ENCODE measurements at regions of chr17 and their contacts with region 1.

Region 1: GRCh38 chr17:8138672-8139371 is 13.4 kb downstream of the PER1 start:
- DNase-seq: peak; percentile 94
- ATAC-seq: peak; percentile 93
- H3K4me3 ChIP-seq: peak overlapping the region; percentile 72
- H3K27ac ChIP-seq: peak overlapping the region; percentile 97
- H3K4me1 ChIP-seq: peaks cover 7% of the 10 kb centered on the region
- H3K27me3 ChIP-seq: no peaks in the 10 kb centered on the region
- CTCF ChIP-seq: peak; percentile 68 to 78 (median 76)
- EP300 ChIP-seq: 0 out of 4 replicates have a peak, but pooled peaks of 1 of the 2 experiments have one; percentile 4
- POLR2A ChIP-seq: peak; percentile 81
- RAD21 ChIP-seq: peak; percentile 57

Region 2: DNA sequence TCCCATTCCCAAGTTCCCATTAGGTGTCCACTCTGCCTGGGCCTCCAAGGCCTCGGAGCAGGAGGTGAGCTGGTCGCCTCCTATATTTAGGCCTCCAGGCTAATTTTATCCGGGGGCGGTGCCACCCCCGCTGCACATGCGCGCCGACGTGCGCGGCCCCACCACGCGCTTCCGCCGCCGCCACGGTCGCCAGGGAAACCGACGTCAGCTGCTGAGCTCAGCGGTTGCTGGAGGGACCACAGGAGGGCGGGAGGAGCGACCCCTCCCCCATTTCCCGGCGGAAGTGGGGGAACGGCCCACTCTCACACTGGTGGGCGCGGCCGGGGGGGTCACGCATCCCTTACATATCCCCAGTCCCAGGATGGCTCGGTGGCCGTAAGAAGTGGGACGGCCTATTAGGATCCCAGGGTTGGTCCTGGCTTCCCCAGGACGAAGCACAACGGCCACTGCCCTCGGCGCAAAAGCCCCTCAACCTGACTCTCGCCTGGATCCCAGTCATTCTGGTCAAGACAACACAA is 12.4 kb after region 1 on chr17:
- CTCF ChIA-PET with region 1: interaction called, 36 read pairs
- POLR2A ChIA-PET with region 1: interaction called, 37 read pairs
- RAD21 ChIA-PET with region 1: interaction called, 33 read pairs
- SMC1A ChIA-PET with region 1: interaction called, 42 read pairs
- in situ Hi-C with region 1: no loop called
- intact Hi-C with region 1: loop called (anchors 1 kb)
- DNase-seq: no peak
- ATAC-seq: peak; percentile 75
- H3K4me3 ChIP-seq: peak overlapping the region; percentile 89
- H3K27ac ChIP-seq: peak overlapping the region; percentile 89
- H3K4me1 ChIP-seq: peaks cover 19% of the 10 kb centered on the region
- H3K27me3 ChIP-seq: no peaks in the 10 kb centered on the region
- CTCF ChIP-seq: no peak
- EP300 ChIP-seq: peak; percentile 45 to 70; a peak in 3 of 4 replicates
- POLR2A ChIP-seq: peak; percentile 69
- RAD21 ChIP-seq: no peak

Region 3: DNA sequence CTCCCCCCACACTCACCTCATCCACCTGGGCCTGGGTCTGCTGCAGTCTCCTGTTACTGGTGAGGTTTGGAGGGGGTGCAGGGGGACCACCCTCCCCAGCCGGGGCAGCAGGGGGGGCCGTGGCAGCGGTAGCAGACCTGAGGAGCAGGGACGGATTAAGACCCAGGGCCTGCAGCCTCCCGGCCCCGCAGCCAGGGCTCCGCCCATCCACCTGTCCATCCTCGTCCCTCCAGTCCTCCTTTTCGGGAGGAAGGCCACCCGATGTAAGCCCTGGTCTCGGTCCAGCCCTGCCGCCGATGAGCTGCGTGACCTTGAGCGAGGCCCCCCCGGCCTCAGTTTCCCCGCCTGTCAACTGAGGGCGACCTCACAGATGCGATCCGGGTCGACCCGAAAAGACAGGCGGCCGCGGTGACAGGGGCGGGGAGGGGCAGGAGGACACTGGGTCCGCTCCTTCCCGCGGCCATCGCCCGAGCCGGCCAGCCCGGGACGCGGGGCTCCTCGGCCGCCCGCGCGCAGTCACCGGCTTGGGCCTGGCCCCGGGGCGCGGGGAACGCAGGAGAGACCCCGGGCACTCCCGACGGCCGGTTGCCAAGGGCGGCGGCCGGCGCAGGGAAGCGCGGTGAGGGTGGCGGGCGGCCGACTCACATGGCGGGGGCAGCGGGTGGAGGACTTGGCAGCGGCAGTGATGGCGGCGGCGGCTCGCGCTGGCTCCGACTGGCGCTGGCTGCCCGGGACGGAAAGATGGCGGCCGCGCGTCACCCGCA is 23.6 kb after region 1 on chr17 and contains the start of gene VAMP2:
- CTCF ChIA-PET with region 1: interaction called, 37 read pairs
- POLR2A ChIA-PET with region 1: interaction called, 11 read pairs
- RAD21 ChIA-PET with region 1: interaction called, 5 read pairs
- SMC1A ChIA-PET with region 1: interaction called, 42 read pairs
- in situ Hi-C with region 1: no loop called
- intact Hi-C with region 1: no loop called
- DNase-seq: no peak
- ATAC-seq: peak; percentile 69
- H3K4me3 ChIP-seq: peak within 1 kb of the TSS; percentile 95
- H3K27ac ChIP-seq: peak within 1 kb of the TSS; percentile 87
- H3K4me1 ChIP-seq: peaks cover 33% of the 10 kb centered on the region
- H3K27me3 ChIP-seq: no peaks in the 10 kb centered on the region
- CTCF ChIP-seq: no peak
- EP300 ChIP-seq: no peak
- POLR2A ChIP-seq: peak; percentile 93
- RAD21 ChIP-seq: no peak
- polyA plus RNA-seq, gene VAMP2: 3.0 to 6.3 TPM

Region 4: GRCh38 chr17:8248751-8249607 is 110.2 kb after region 1 on chr17 and contains the start of gene PFAS:
- CTCF ChIA-PET with region 1: no interaction called
- POLR2A ChIA-PET with region 1: interaction called, 12 read pairs
- RAD21 ChIA-PET with region 1: interaction called, 5 read pairs
- SMC1A ChIA-PET with region 1: no interaction called
- in situ Hi-C with region 1: no loop called
- intact Hi-C with region 1: no loop called
- DNase-seq: peak; percentile 79
- ATAC-seq: peak; percentile 64
- H3K4me3 ChIP-seq: peak within 1 kb of the TSS; percentile 100
- H3K27ac ChIP-seq: peak within 1 kb of the TSS; percentile 100
- H3K4me1 ChIP-seq: peaks cover 10% of the 10 kb centered on the region
- H3K27me3 ChIP-seq: no peaks in the 10 kb centered on the region
- CTCF ChIP-seq: no peak
- EP300 ChIP-seq: peak; percentile 30 to 57; a peak in 2 of 4 replicates
- POLR2A ChIP-seq: peak; percentile 92
- RAD21 ChIP-seq: no peak
- polyA plus RNA-seq, gene PFAS: 13.9 to 16.1 TPM

Region 5: GRCh38 chr17:8420041-8420934 is 281.5 kb after region 1 on chr17:
- CTCF ChIA-PET with region 1: no interaction called
- POLR2A ChIA-PET with region 1: no interaction called
- RAD21 ChIA-PET with region 1: no interaction called
- SMC1A ChIA-PET with region 1: no interaction called
- in situ Hi-C with region 1: no loop called
- intact Hi-C with region 1: no loop called
- DNase-seq: no peak
- ATAC-seq: no peak
- H3K4me3 ChIP-seq: no peak overlapping the region
- H3K27ac ChIP-seq: no peak overlapping the region
- H3K4me1 ChIP-seq: no peaks in the 10 kb centered on the region
- H3K27me3 ChIP-seq: peaks cover 2 to 3% of the 10 kb centered on the region in 2 experiments; a peak in 3 of 4 replicates
- CTCF ChIP-seq: no peak
- EP300 ChIP-seq: no peak
- POLR2A ChIP-seq: no peak
- RAD21 ChIP-seq: no peak